Panc1 (cell line): ENCODE measurements at regions of chr12 and their contacts with region 1.

Region 1: GRCh38 chr12:62983599-62984022 is 48.7 kb upstream of the PPM1H start:
- DNase-seq: no peak
- ATAC-seq: no peak
- H3K4me3 ChIP-seq: no peak overlapping the region
- H3K27ac ChIP-seq: no peak overlapping the region
- H3K4me1 ChIP-seq: no peaks in the 10 kb centered on the region
- H3K27me3 ChIP-seq: no peaks in the 10 kb centered on the region; the same call in 1 of the 2 replicates
- CTCF ChIP-seq: peak; percentile 58

Region 2: DNA sequence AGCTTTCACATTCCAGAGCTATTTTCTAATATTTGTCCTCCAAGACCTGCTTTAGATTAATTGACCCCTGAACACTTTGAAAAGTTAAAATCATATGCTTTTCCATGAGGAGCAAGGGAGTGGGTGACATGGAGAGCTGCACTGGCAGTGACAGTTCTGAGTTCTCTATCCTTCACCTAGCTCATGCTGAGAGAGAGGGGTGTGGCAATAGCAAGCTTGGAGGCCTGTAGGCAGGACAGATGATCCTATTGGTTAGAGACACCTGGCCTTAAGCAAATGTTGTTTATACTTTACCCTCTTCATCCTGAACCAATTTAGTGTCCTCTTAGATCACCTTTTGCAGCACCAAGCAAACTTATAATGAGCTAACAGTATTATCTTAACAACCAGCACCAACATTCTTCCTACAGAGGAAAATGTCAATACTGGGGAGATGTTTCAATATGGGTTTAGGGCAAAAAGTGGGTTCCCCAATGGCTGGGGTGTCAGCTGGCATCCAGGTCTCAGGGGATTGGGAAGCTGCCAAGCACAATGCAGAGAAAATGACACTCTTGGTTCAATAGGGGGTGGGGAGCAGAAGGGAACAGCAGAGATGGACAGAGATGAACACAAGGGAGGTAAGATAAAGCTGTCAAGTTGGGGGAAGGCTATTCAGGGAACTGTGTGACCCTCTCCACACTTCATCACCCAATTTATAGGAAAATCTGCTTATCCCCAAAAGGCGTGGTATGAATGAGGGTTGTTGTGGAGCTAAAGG is 11.7 kb before region 1 on chr12:
- CTCF ChIA-PET with region 1: no interaction called
- POLR2A ChIA-PET with region 1: interaction called, 14 read pairs
- in situ Hi-C with region 1: no loop called
- intact Hi-C with region 1: no loop called
- DNase-seq: no peak
- ATAC-seq: no peak
- H3K4me3 ChIP-seq: no peak overlapping the region
- H3K27ac ChIP-seq: no peak overlapping the region
- H3K4me1 ChIP-seq: 0 out of 2 replicates have a peak, but pooled peaks cover 4% of the 10 kb centered on the region
- H3K27me3 ChIP-seq: peaks cover 4% of the 10 kb centered on the region; the same call in 1 of the 2 replicates
- CTCF ChIP-seq: no peak

Region 3: DNA sequence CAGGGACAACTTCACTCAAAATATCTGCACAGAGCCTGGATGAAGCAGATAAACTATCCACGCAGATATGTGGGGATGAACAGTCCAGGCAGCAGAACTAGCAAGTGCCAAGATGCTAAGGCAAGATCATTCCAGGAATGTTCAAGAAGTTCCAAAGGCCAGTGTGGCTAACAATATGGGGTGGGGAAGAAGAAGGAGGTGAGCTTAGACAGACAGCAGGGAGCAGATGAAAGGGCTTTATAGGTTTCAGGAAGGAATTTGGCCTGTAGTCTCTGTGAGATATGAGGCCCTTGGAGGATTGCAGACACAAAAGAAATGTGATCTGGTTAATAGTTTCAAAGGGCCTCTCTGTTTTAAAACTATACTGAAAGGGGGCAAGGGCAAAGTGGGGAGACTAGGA is 14.8 kb after region 1 on chr12:
- CTCF ChIA-PET with region 1: no interaction called
- POLR2A ChIA-PET with region 1: no interaction called
- in situ Hi-C with region 1: no loop called
- intact Hi-C with region 1: no loop called
- DNase-seq: no peak
- ATAC-seq: no peak
- H3K4me3 ChIP-seq: no peak overlapping the region
- H3K27ac ChIP-seq: no peak overlapping the region
- H3K4me1 ChIP-seq: no peaks in the 10 kb centered on the region
- H3K27me3 ChIP-seq: peaks cover 2% of the 10 kb centered on the region; the same call in 1 of the 2 replicates
- CTCF ChIP-seq: no peak